Naive thymus-derived CD4-positive, alpha-beta T cell (primary cell): ENCODE measurements at regions of chr3 and their contacts with region 1.

Region 1: GRCh38 chr3:187919048-187919447 is 173.8 kb upstream of the BCL6 start:
- DNase-seq: peak in 8 of 9 donors; percentile 50 to 64 (median 60)
- ATAC-seq: peak; percentile 90
- H3K4me3 ChIP-seq: peak overlapping the region; percentile 48
- H3K4me3 Mint-ChIP-seq: peak overlapping the region; percentile 69 to 86 (median 81)
- H3K27ac ChIP-seq: peak overlapping the region; percentile 13
- H3K27ac Mint-ChIP-seq: peak overlapping the region; percentile 58 to 94 (median 90)
- H3K4me1 ChIP-seq: peaks cover 15 to 28% of the 10 kb centered on the region in 2 donors
- H3K4me1 Mint-ChIP-seq: peaks cover 34 to 80% (median 48%) of the 10 kb centered on the region in 7 donors
- H3K27me3 ChIP-seq: no peaks in the 10 kb centered on the region
- H3K27me3 Mint-ChIP-seq: peaks cover 0 to 10% (median 0%) of the 10 kb centered on the region in 5 donors

Region 2: GRCh38 chr3:187802928-187803259 is 116.2 kb before region 1 on chr3:
- CTCF ChIA-PET with region 1: no interaction called
- POLR2A ChIA-PET with region 1: no interaction called
- intact Hi-C with region 1: loop called in 1 of 2 experiments (anchors 1 kb)
- DNase-seq: peak in 1 of 9 donors; percentile 66
- ATAC-seq: peak; percentile 56
- H3K4me3 ChIP-seq: no peak overlapping the region
- H3K4me3 Mint-ChIP-seq: peak overlapping the region in 6 of 10 donors; percentile 14 to 69 (median 34)
- H3K27ac ChIP-seq: no peak overlapping the region
- H3K27ac Mint-ChIP-seq: peak overlapping the region in 1 of 9 donors; percentile 90
- H3K4me1 ChIP-seq: peaks cover 22 to 47% of the 10 kb centered on the region in 2 donors
- H3K4me1 Mint-ChIP-seq: peaks cover 23 to 93% (median 44%) of the 10 kb centered on the region in 7 donors
- H3K27me3 ChIP-seq: no peaks in the 10 kb centered on the region
- H3K27me3 Mint-ChIP-seq: no peaks in the 10 kb centered on the region

Region 3: GRCh38 chr3:187955076-187955952 is 36.3 kb after region 1 on chr3:
- CTCF ChIA-PET with region 1: no interaction called
- POLR2A ChIA-PET with region 1: no interaction called
- intact Hi-C with region 1: loop called (anchors 1 to 5 kb)
- DNase-seq: no peak
- ATAC-seq: no peak
- H3K4me3 ChIP-seq: no peak overlapping the region
- H3K4me3 Mint-ChIP-seq: no peak overlapping the region
- H3K27ac ChIP-seq: no peak overlapping the region
- H3K27ac Mint-ChIP-seq: peak overlapping the region in 1 of 9 donors; percentile 5
- H3K4me1 ChIP-seq: peaks cover 15 to 18% of the 10 kb centered on the region in 2 donors
- H3K4me1 Mint-ChIP-seq: peaks cover 8 to 56% (median 29%) of the 10 kb centered on the region in 7 donors
- H3K27me3 ChIP-seq: no peaks in the 10 kb centered on the region
- H3K27me3 Mint-ChIP-seq: no peaks in the 10 kb centered on the region

Region 4: DNA sequence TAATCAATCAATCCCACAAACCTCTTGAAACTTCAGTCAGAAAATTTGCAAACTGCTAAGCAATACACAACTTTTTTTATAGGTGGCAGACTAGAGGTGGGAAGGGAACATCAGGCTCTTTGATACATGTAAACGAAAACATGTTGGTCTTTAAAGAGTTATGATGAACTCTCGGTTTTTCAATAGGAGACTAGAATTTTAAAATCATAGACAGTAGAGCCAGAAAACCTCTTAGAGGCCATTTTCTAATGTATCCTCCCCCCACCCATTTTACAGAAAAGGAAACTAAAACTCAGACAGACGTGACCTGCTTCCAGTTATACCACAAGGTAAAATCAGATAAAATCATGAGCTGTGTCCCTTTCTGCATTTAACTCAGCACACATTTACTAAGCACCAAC is 55.8 kb after region 1 on chr3:
- CTCF ChIA-PET with region 1: interaction called, 3 read pairs
- POLR2A ChIA-PET with region 1: no interaction called
- intact Hi-C with region 1: loop called (anchors 1 kb)
- DNase-seq: peak in 6 of 9 donors; percentile 8 to 42 (median 32)
- ATAC-seq: peak; percentile 67
- H3K4me3 ChIP-seq: peak overlapping the region; percentile 3
- H3K4me3 Mint-ChIP-seq: peak overlapping the region; percentile 41 to 85 (median 76)
- H3K27ac ChIP-seq: no peak overlapping the region
- H3K27ac Mint-ChIP-seq: peak overlapping the region; percentile 44 to 96 (median 80)
- H3K4me1 ChIP-seq: peaks cover 36 to 40% of the 10 kb centered on the region in 2 donors
- H3K4me1 Mint-ChIP-seq: peaks cover 31 to 71% (median 49%) of the 10 kb centered on the region in 7 donors
- H3K27me3 ChIP-seq: no peaks in the 10 kb centered on the region
- H3K27me3 Mint-ChIP-seq: no peaks in the 10 kb centered on the region

Region 5: GRCh38 chr3:188061133-188061532 is 142.1 kb after region 1 on chr3:
- CTCF ChIA-PET with region 1: no interaction called
- POLR2A ChIA-PET with region 1: no interaction called
- intact Hi-C with region 1: loop called in 1 of 2 experiments (anchors 1 kb)
- DNase-seq: peak in 6 of 9 donors; percentile 4 to 60 (median 11)
- ATAC-seq: peak; percentile 86
- H3K4me3 ChIP-seq: no peak overlapping the region
- H3K4me3 Mint-ChIP-seq: peak overlapping the region in 1 of 10 donors; percentile 62
- H3K27ac ChIP-seq: no peak overlapping the region
- H3K27ac Mint-ChIP-seq: peak overlapping the region in 4 of 9 donors; percentile 19 to 74 (median 31)
- H3K4me1 ChIP-seq: peaks cover 3 to 8% of the 10 kb centered on the region in 2 donors
- H3K4me1 Mint-ChIP-seq: peaks cover 0 to 25% (median 13%) of the 10 kb centered on the region in 7 donors
- H3K27me3 ChIP-seq: no peaks in the 10 kb centered on the region
- H3K27me3 Mint-ChIP-seq: no peaks in the 10 kb centered on the region

Region 6: DNA sequence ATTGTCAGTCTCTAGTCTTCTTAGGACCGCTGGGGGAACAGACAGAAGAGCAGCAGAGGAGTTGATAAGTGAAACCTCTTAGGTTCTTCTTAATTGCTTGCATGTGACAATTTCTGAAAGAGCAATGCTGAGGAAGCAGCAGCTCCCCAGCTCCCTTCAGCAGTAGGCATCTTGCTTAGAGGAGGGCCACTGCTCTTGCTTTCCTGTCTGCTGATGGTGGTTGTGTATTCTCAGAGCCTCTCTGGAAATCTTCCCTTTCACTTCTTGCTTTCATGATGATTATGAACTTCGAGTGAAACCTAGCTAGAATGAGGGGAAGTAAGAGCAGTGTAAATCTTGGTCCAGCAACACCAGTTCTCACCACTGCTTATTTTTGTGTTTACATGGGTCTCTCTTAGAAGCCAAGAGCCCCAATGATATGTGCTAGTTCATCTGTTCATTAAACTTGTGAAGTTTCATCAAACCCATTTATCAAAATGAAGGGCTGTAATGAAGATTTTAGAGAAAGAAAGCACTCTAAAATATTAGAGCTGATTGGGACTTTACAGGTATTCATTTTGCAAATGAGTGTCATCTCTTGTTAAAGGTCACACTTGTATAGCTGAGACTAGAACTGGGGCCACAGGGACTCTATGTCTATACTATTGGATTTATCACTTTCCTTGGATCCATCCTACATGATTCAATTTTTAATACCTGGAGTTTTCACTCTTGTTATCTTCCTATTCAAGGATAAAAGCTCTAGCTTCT is 481.6 kb after region 1 on chr3:
- CTCF ChIA-PET with region 1: no interaction called
- POLR2A ChIA-PET with region 1: no interaction called
- intact Hi-C with region 1: loop called in 1 of 2 experiments (anchors 5 kb)
- DNase-seq: no peak
- ATAC-seq: peak; percentile 75
- H3K4me3 ChIP-seq: no peak overlapping the region
- H3K4me3 Mint-ChIP-seq: peak overlapping the region in 1 of 10 donors; percentile 42
- H3K27ac ChIP-seq: no peak overlapping the region
- H3K27ac Mint-ChIP-seq: peak overlapping the region in 2 of 9 donors; percentile 58 to 69
- H3K4me1 ChIP-seq: peaks cover 0 to 4% of the 10 kb centered on the region in 2 donors
- H3K4me1 Mint-ChIP-seq: peaks cover 28 to 63% (median 49%) of the 10 kb centered on the region in 7 donors
- H3K27me3 ChIP-seq: no peaks in the 10 kb centered on the region
- H3K27me3 Mint-ChIP-seq: no peaks in the 10 kb centered on the region